CD4-positive, alpha-beta T cell (primary cell): ENCODE measurements at regions of chr9 and their contacts with region 1.

Region 1: GRCh38 chr9:100011062-100011681 is 87.6 kb downstream of the ERP44 start:
- DNase-seq: peak in 8 of 14 experiments; percentile 3 to 75 (median 38)
- ATAC-seq: peak; percentile 58
- H3K4me3 ChIP-seq: no peak overlapping the region
- H3K4me3 Mint-ChIP-seq: no peak overlapping the region
- H3K27ac ChIP-seq: no peak overlapping the region
- H3K27ac Mint-ChIP-seq: no peak overlapping the region
- H3K4me1 ChIP-seq: no peaks in the 10 kb centered on the region
- H3K4me1 Mint-ChIP-seq: no peaks in the 10 kb centered on the region
- H3K27me3 ChIP-seq: no peaks in the 10 kb centered on the region
- H3K27me3 Mint-ChIP-seq: no peaks in the 10 kb centered on the region
- CTCF ChIP-seq: peak; percentile 73

Region 2: GRCh38 chr9:99162759-99163364 is 848.3 kb before region 1 on chr9:
- CTCF ChIA-PET with region 1: no interaction called
- POLR2A ChIA-PET with region 1: no interaction called
- intact Hi-C with region 1: loop called in 1 of 2 experiments (anchors 10 kb)
- DNase-seq: peak in 3 of 14 experiments; percentile 43 to 62 (median 61)
- ATAC-seq: peak; percentile 52
- H3K4me3 ChIP-seq: no peak overlapping the region
- H3K4me3 Mint-ChIP-seq: no peak overlapping the region
- H3K27ac ChIP-seq: no peak overlapping the region
- H3K27ac Mint-ChIP-seq: no peak overlapping the region
- H3K4me1 ChIP-seq: peaks cover 3% of the 10 kb centered on the region
- H3K4me1 Mint-ChIP-seq: peaks cover 15% of the 10 kb centered on the region
- H3K27me3 ChIP-seq: no peaks in the 10 kb centered on the region
- H3K27me3 Mint-ChIP-seq: peaks cover 15% of the 10 kb centered on the region
- CTCF ChIP-seq: peak; percentile 66

Region 3: DNA sequence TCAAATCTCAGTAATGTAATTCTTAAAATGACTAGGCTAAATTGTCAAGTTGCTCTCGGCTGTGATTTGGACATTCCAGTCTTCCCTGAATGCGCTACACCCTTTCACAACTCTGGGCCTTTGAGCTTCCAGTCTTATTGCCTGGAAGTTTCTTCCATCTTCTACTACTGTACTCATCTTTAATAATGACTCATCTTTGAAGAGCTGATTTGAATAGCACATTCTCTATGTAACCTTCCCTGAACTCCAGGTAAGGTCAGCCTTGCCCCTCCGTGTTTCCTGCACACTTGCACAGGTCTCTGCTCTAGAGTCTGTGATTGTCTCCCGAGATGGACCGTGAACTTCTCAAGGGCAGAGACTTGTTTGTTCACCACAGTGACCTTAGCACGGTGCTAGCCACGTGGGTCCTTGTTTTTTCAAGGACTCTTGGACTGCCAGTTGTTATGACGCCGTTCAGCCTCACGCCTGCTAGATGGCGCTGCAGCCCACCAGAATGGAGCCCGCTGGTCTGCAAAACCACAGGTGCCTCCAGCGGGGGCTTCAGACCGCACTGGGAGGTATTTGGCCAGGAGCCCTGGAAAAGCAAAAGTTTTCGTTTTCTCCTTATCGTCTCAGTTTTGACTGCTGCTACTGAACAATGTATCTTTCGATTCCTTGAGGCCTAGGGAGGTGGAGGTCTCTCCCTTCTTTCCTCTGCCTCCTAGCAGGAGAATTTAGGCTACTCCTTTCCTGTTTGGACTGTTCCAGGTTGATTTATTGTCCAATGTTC is 744.7 kb before region 1 on chr9:
- CTCF ChIA-PET with region 1: no interaction called
- POLR2A ChIA-PET with region 1: no interaction called
- intact Hi-C with region 1: loop called in 1 of 2 experiments (anchors 1 kb)
- DNase-seq: peak; percentile 14 to 72 (median 42)
- ATAC-seq: peak; percentile 41
- H3K4me3 ChIP-seq: no peak overlapping the region
- H3K4me3 Mint-ChIP-seq: no peak overlapping the region
- H3K27ac ChIP-seq: no peak overlapping the region
- H3K27ac Mint-ChIP-seq: no peak overlapping the region
- H3K4me1 ChIP-seq: peaks cover 7% of the 10 kb centered on the region
- H3K4me1 Mint-ChIP-seq: peaks cover 11% of the 10 kb centered on the region
- H3K27me3 ChIP-seq: no peaks in the 10 kb centered on the region
- H3K27me3 Mint-ChIP-seq: peaks cover 9% of the 10 kb centered on the region
- CTCF ChIP-seq: peak; percentile 81

Region 4: DNA sequence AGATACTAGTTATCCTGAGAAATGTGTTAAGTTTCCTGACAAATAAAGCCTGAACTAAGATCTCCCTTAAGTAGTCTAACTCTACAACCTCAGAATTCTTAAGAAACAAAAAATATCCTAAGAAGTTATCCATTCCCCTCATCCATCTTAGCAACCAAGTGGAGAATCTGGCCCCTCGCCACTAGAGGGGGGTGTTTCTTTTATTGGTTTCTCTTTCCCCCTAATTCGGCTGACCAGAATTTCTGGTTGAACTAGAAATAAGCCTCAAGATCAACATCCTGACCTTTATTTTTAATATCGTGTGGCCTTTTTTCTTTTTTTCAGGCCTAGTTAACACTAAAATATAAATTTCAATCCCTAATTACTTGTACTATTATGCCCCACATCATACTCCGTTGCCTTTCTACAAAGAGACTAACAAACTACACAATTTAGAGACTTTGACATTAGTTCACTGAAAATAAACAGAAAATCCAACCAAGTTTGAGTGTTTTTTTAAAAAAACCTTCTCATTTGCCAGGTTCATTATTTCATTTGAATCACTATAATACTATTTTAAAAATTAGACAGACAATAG is 203.8 kb before region 1 on chr9:
- CTCF ChIA-PET with region 1: interaction called, 4 read pairs
- POLR2A ChIA-PET with region 1: no interaction called
- intact Hi-C with region 1: loop called (anchors 1 kb)
- DNase-seq: peak; percentile 53 to 85 (median 59)
- ATAC-seq: peak; percentile 84
- H3K4me3 ChIP-seq: no peak overlapping the region
- H3K4me3 Mint-ChIP-seq: no peak overlapping the region
- H3K27ac ChIP-seq: no peak overlapping the region
- H3K27ac Mint-ChIP-seq: no peak overlapping the region
- H3K4me1 ChIP-seq: no peaks in the 10 kb centered on the region
- H3K4me1 Mint-ChIP-seq: no peaks in the 10 kb centered on the region
- H3K27me3 ChIP-seq: no peaks in the 10 kb centered on the region
- H3K27me3 Mint-ChIP-seq: peaks cover 4% of the 10 kb centered on the region
- CTCF ChIP-seq: peak; percentile 95